CD8-positive, alpha-beta T cell (primary cell): ENCODE measurements at regions of chr15 and their contacts with region 1.

Region 1: DNA sequence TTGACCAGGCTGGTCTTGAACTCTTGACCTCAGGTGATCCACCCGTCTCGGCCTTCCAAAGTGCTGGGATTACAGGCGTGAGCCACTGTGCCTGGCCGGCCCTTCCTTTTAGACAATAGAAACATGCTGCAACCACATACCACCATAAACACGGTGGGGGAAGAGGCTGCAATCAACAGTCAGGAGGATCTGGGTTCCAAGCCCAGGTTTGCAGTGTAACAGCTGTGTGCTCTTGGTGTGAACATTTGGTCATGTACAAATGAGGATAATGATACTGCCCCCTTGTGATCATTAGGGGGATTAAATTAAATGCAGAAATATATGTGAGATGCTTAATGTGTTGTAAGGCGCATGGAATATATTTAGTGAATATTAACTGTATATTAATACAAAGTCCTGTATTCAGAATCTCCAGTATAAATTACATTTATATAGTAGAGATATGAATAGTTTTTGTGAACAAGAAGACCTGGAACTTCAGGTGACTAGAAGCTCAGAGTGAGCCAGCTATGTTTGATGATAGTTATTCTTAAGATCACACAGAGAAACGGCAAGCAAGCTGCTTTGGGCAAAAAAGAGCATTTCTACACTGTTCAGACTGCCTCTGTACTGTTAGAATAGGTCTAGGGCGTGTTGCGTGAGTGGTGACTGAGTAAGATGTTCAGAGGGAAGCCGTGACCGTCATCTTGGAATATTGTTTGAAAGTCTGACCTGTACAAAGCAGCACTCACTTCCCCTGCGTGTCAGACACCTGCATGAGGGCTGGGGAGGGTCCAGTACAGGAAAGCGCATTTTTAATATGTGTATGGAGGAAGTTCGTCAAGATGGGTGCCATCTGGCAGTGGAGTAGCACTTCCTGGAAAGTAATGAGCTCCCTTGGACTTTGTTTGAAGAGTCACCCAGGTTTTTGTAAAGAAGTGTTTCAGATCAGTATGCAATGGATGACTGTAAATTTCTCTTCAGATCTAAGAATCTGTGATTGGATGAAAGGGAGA is 125.8 kb downstream of the PGPEP1L start:
- DNase-seq: peak in 2 of 9 experiments; percentile 47 to 64
- ATAC-seq: no peak
- H3K4me3 ChIP-seq: no peak overlapping the region
- H3K4me3 Mint-ChIP-seq: no peak overlapping the region
- H3K27ac ChIP-seq: no peak overlapping the region
- H3K27ac Mint-ChIP-seq: no peak overlapping the region
- H3K4me1 ChIP-seq: no peaks in the 10 kb centered on the region
- H3K4me1 Mint-ChIP-seq: peaks cover 17% of the 10 kb centered on the region
- H3K27me3 ChIP-seq: no peaks in the 10 kb centered on the region
- H3K27me3 Mint-ChIP-seq: no peaks in the 10 kb centered on the region
- CTCF ChIP-seq: peak; percentile 60

Region 2: GRCh38 chr15:98442379-98442833 is 439.4 kb before region 1 on chr15:
- CTCF ChIA-PET with region 1: no interaction called
- POLR2A ChIA-PET with region 1: no interaction called
- intact Hi-C with region 1: loop called in 1 of 2 experiments (anchors 2 kb)
- DNase-seq: peak in 7 of 9 experiments; percentile 31 to 64 (median 54)
- ATAC-seq: peak; percentile 79
- H3K4me3 ChIP-seq: no peak overlapping the region
- H3K4me3 Mint-ChIP-seq: no peak overlapping the region
- H3K27ac ChIP-seq: no peak overlapping the region
- H3K27ac Mint-ChIP-seq: no peak overlapping the region
- H3K4me1 ChIP-seq: no peaks in the 10 kb centered on the region
- H3K4me1 Mint-ChIP-seq: no peaks in the 10 kb centered on the region
- H3K27me3 ChIP-seq: no peaks in the 10 kb centered on the region
- H3K27me3 Mint-ChIP-seq: peaks cover 6% of the 10 kb centered on the region
- CTCF ChIP-seq: peak; percentile 60